Activated CD4-positive, alpha-beta memory T cell treated with anti-CD3 and anti-CD28 coated beads for 36 hours (primary cell): ENCODE measurements at regions of chr9 and their contacts with region 1.

Region 1: GRCh38 chr9:69759421-69760277 is at the start of gene PTAR1:
- DNase-seq: peak; percentile 93
- H3K4me3 Mint-ChIP-seq: peak within 1 kb of the TSS; percentile 92
- H3K27ac Mint-ChIP-seq: peak within 1 kb of the TSS; percentile 89
- H3K4me1 Mint-ChIP-seq: peaks cover 27% of the 10 kb centered on the region
- H3K27me3 Mint-ChIP-seq: no peaks in the 10 kb centered on the region
- total RNA-seq, gene PTAR1: 37.0 to 37.3 TPM

Region 2: GRCh38 chr9:69672596-69673310 is 86.9 kb before region 1 on chr9:
- CTCF ChIA-PET with region 1: interaction called, 6 read pairs
- POLR2A ChIA-PET with region 1: interaction called, 3 read pairs
- intact Hi-C with region 1: loop called (anchors 1 kb)
- DNase-seq: peak; percentile 81
- H3K4me3 Mint-ChIP-seq: peak overlapping the region; percentile 69
- H3K27ac Mint-ChIP-seq: no peak overlapping the region
- H3K4me1 Mint-ChIP-seq: peaks cover 16% of the 10 kb centered on the region
- H3K27me3 Mint-ChIP-seq: peaks cover 22% of the 10 kb centered on the region

Region 3: GRCh38 chr9:69809304-69809863 is 49.7 kb after region 1 on chr9:
- CTCF ChIA-PET with region 1: no interaction called
- POLR2A ChIA-PET with region 1: no interaction called
- intact Hi-C with region 1: loop called (anchors 10 kb)
- DNase-seq: peak; percentile 20
- H3K4me3 Mint-ChIP-seq: no peak overlapping the region
- H3K27ac Mint-ChIP-seq: no peak overlapping the region
- H3K4me1 Mint-ChIP-seq: no peaks in the 10 kb centered on the region
- H3K27me3 Mint-ChIP-seq: peaks cover 6% of the 10 kb centered on the region

Region 4: DNA sequence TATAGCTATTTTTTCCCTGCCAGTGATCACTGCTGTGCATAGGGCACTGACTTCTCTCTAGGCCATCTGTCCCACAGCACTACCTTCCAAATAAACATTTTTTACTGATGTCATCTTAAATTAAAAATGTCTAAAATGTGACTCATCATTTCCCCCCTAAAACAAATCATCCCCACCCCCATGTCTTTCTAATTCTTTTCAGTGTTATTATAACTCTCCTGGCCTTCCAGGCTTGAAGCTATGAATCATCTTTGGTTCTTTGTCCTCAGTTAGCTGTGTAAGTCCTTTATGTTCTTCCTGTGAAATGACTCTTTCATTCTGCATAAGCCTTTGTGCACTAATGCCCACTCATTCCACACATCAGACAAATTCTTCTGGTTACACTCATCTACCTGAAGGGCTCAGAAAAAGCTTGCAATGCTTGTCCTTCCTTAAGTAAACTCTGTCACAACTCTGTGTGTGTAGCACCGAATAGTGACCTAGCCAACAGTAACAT is 139.1 kb after region 1 on chr9:
- CTCF ChIA-PET with region 1: no interaction called
- POLR2A ChIA-PET with region 1: no interaction called
- intact Hi-C with region 1: loop called (anchors 5 kb)
- DNase-seq: no peak
- H3K4me3 Mint-ChIP-seq: no peak overlapping the region
- H3K27ac Mint-ChIP-seq: no peak overlapping the region
- H3K4me1 Mint-ChIP-seq: peaks cover 9% of the 10 kb centered on the region
- H3K27me3 Mint-ChIP-seq: no peaks in the 10 kb centered on the region

Region 5: DNA sequence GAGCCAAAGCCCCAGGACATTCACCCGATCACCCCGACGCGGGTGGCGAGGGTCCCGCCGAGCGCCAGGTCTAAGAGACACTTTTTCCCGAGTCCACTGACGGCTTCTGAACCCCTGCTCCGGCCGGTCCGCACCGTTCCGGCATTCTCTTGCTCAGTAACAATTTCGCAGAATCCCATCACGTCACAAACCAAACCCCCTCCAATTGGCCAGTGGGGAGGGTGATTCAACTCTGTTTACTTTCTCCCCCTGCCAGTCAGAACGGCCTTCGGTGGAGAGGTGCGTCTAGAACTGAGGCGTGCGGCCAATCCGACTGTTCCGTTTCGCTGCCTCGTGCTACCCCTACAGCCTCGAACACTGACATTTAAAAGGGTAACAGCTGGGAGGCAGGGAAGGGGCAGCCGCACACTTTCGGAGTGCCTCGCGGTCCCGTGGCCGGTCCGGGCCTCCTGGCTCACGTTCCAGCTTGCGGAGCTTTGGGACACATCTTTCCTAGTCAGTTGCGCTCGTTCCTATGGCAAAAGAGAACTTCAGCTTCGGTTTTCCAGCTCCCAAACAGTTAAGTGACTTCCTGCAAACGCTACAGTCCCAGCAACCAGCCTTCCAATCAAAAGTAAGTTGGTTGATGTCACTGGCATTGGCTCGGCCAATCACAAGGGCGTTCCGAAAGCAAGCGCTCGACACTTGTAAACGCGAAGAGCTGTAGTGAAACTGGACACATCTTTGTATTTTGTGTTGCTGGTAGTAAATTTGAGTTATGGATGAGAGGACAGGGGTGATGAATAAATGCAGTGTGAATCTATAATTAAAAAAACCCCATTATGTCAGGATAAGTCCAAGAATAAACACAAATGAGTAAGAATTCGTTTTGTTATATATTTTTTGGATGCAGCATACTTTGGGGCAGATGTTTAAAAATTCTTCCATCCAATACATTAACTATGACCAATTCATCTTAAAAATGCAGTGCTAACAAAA is 654.4 kb after region 1 on chr9 and contains the start of gene KLF9:
- CTCF ChIA-PET with region 1: no interaction called
- POLR2A ChIA-PET with region 1: no interaction called
- intact Hi-C with region 1: loop called (anchors 5 kb)
- DNase-seq: peak; percentile 96
- H3K4me3 Mint-ChIP-seq: peak within 1 kb of the TSS; percentile 97
- H3K27ac Mint-ChIP-seq: peak within 1 kb of the TSS; percentile 100
- H3K4me1 Mint-ChIP-seq: peaks cover 37% of the 10 kb centered on the region
- H3K27me3 Mint-ChIP-seq: peaks cover 2% of the 10 kb centered on the region
- total RNA-seq, gene KLF9: 23.7 to 24.5 TPM